GM10248 (cell line): ENCODE measurements at regions of chr2 and their contacts with region 1.

Region 1: GRCh38 chr2:72993147-72993932 is 76.0 kb downstream of the EMX1 start:
- DNase-seq: peak; percentile 78
- CTCF ChIP-seq: peak; percentile 70

Region 2: GRCh38 chr2:73004889-73005596 is 11.7 kb after region 1 on chr2:
- CTCF ChIA-PET with region 1: interaction called, 12 read pairs
- POLR2A ChIA-PET with region 1: interaction called, 5 read pairs
- DNase-seq: no peak
- CTCF ChIP-seq: no peak

Region 3: DNA sequence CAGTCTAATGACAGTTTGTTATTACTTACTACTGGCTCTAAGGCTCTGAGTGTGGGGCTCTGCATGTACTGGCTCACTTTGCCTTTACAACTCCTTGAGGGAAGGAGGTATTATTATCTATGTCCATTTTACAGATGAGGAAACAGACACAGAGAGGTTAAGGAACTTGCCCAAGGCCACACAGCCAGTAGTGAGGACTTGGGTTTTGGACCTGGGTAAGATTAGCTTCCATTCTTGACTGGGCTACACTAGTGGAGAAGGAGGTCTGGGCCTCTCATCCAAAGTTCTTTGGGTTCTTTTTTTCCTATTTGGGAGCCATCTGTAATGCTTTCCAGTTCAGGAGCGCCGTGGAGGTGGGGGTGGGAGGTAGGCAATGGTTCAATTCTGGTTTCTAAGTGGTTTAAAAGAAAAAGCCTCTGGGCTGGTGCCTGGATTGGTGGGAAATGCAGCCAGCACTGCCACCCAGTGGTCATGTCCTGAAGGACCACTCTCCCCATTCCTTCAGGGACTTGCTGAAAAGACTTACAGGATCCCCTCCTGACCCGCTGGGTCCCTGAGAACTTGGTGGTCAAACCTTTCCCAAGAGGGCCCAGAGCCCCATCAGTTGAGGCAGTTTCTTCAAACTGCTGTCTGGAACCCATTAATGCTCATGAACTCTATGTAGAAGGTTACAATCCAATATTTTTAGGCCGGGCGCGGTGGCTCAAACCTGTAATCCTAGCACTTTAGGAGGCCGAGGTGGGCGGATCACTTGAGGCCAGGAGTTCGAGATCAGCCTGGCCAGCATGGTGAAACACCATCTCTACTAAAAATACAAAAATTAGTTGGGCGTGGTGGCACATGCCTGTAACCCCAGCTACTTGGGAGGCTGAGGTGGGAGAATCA is 170.4 kb after region 1 on chr2:
- CTCF ChIA-PET with region 1: interaction called, 42 read pairs
- POLR2A ChIA-PET with region 1: no interaction called
- DNase-seq: peak; percentile 81
- CTCF ChIP-seq: peak; percentile 88